ENCODE measurements at regions of chr5 and their contacts with region 1.

Region 1: DNA sequence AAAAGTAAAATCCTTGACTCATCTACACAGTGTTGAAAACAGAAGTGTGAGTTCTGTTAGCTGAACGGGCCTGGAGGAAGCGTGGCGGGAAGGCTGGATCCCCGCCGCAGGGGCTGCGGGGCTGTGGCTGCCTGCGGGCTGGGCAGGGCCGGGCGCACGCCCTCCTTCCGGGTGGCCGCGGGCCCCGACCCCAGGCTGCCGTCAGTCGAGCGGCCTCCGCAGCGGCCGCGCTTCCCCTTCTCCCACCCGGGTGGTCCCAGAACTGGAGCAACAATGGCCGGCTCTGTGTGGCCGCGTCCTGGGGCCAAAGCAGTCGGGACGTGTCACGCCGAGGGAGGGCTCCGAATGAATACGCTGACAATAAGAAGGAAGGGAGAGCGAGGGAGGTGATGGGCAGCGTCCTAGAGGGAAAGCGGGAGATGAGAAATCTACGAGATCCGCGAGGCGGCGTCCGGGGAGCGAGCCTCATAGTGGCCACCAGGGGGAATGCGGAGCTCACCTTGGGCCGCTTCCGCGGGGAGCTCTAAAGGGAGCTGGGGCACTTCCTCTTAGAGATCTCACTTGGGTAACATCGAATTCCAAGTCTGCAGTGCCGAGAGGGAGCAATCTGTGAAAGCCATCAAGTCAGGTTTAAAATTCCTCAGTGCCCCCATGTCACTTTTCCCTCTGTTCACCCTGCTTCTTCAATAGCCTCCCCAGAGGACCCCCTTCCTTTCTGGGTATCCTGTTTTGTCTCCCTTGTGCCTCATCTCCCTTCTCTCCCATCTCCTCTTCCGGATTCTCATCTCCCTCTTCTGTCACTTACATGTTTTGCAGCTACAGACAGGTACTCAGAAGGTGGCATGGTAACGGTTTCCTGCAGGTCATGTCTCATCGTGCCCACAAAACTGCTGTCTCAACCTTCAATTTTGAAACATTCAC is 83.9 kb downstream of the SLC1A3 start:
- DNase-seq: peak; percentile 69
- ATAC-seq: peak; percentile 80
- H3K4me3 Mint-ChIP-seq: peak overlapping the region; percentile 94
- H3K27ac Mint-ChIP-seq: peak overlapping the region; percentile 86
- H3K4me1 Mint-ChIP-seq: peaks cover 39% of the 10 kb centered on the region
- H3K27me3 Mint-ChIP-seq: no peaks in the 10 kb centered on the region
- CTCF ChIP-seq: no peak

Region 2: GRCh38 chr5:34838785-34839714 is 1851.3 kb before region 1 on chr5 and contains the start of gene TTC23L:
- CTCF ChIA-PET with region 1: no interaction called
- POLR2A ChIA-PET with region 1: no interaction called
- intact Hi-C with region 1: loop called (anchors 10 kb)
- DNase-seq: peak; percentile 88
- ATAC-seq: peak; percentile 89
- H3K4me3 Mint-ChIP-seq: peak within 1 kb of the TSS; percentile 94
- H3K27ac Mint-ChIP-seq: peak within 1 kb of the TSS; percentile 96
- H3K4me1 Mint-ChIP-seq: peaks cover 13% of the 10 kb centered on the region
- H3K27me3 Mint-ChIP-seq: peaks cover 2% of the 10 kb centered on the region
- CTCF ChIP-seq: no peak
- total RNA-seq, gene TTC23L: not detected in 2 replicates

Region 3: DNA sequence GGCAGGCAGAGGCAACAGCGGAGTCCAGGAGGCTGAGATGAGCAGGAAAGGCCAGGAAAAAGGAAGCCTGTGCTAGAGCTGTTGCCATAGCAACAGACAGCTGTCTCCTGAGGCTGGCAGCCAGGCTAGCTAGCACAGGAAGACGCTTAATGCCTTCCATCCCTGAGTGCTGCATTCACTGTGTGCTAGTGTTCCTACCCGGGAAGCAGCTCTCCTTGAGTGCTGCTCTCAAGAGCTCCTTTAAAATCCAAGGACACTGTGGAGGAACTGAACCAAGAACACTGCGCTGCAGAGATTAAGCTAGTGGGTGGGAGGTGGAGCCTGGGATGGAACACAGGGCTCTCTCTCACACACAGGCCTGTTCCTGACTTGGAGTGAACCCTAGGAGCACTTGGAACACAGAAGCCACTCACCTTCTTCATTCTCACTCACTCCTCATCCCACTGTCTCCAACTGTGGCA is 887.1 kb before region 1 on chr5:
- CTCF ChIA-PET with region 1: no interaction called
- POLR2A ChIA-PET with region 1: no interaction called
- intact Hi-C with region 1: no loop called
- DNase-seq: no peak
- ATAC-seq: no peak
- H3K4me3 Mint-ChIP-seq: no peak overlapping the region
- H3K27ac Mint-ChIP-seq: no peak overlapping the region
- H3K4me1 Mint-ChIP-seq: no peaks in the 10 kb centered on the region
- H3K27me3 Mint-ChIP-seq: no peaks in the 10 kb centered on the region
- CTCF ChIP-seq: no peak

Region 4: GRCh38 chr5:36079200-36079761 is 611.0 kb before region 1 on chr5:
- CTCF ChIA-PET with region 1: interaction called, 13 read pairs
- POLR2A ChIA-PET with region 1: no interaction called
- intact Hi-C with region 1: loop called (anchors 2 kb)
- DNase-seq: no peak
- ATAC-seq: peak; percentile 73
- H3K4me3 Mint-ChIP-seq: no peak overlapping the region
- H3K27ac Mint-ChIP-seq: no peak overlapping the region
- H3K4me1 Mint-ChIP-seq: no peaks in the 10 kb centered on the region
- H3K27me3 Mint-ChIP-seq: peaks cover 16% of the 10 kb centered on the region
- CTCF ChIP-seq: no peak

Region 5: DNA sequence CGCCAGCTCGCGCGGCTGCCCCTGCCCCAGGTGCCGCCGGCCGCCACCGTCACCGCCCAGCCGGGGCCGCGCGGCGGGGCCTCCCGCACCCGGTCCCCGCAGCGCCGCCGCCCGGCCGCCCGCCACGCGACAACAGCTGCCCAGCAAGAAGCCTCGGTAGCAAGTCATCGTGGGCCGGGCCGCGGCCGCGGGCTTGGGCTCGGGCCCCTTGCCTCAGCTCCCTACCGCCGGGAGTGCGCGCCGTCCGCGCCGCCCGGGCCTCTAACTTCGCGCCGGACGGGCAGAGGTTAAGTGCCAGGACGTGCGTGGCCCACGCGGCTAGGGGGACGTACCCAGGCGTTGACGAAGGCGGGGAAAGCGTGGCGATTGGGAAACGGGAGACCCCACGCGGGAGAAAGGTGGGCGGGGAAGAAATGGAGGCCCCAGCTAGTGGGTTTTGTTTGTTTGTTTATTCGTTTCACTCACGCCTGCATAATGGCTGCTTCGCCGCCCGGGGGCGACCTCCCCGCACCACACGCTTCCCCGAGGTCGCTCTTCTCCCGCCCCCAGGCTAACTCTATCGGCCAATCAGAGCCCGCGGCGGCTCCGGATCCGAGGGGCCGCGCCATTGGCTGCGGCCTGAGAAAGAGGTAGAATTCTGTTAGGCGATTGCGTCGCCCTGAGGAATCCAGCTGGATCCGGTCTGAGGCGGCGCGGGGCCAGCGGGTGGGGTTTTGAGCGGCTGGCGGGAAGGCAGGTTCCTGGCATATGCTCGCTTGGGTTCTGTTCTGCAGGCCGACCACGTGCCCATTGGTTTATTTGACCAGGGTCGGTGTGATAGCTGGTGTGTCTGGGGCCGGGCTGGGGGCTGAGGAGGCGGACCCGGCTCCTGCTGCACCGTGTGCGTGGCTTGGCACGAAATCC is 448.4 kb before region 1 on chr5 and contains the start of gene NADK2:
- CTCF ChIA-PET with region 1: interaction called, 8 read pairs
- POLR2A ChIA-PET with region 1: interaction called, 10 read pairs
- intact Hi-C with region 1: loop called (anchors 1 kb)
- DNase-seq: peak; percentile 87
- ATAC-seq: peak; percentile 87
- H3K4me3 Mint-ChIP-seq: peak within 1 kb of the TSS; percentile 91
- H3K27ac Mint-ChIP-seq: peak within 1 kb of the TSS; percentile 95
- H3K4me1 Mint-ChIP-seq: peaks cover 49% of the 10 kb centered on the region
- H3K27me3 Mint-ChIP-seq: no peaks in the 10 kb centered on the region
- CTCF ChIP-seq: no peak
- total RNA-seq, gene NADK2: 13.3 and 18.2 TPM in 2 replicates

Region 6: GRCh38 chr5:36507332-36507952 is 182.9 kb before region 1 on chr5:
- CTCF ChIA-PET with region 1: interaction called, 15 read pairs
- POLR2A ChIA-PET with region 1: no interaction called
- intact Hi-C with region 1: loop called (anchors 1 kb)
- DNase-seq: peak; percentile 56
- ATAC-seq: peak; percentile 28
- H3K4me3 Mint-ChIP-seq: no peak overlapping the region
- H3K27ac Mint-ChIP-seq: no peak overlapping the region
- H3K4me1 Mint-ChIP-seq: no peaks in the 10 kb centered on the region
- H3K27me3 Mint-ChIP-seq: peaks cover 13% of the 10 kb centered on the region
- CTCF ChIP-seq: peak; percentile 48

Region 7: DNA sequence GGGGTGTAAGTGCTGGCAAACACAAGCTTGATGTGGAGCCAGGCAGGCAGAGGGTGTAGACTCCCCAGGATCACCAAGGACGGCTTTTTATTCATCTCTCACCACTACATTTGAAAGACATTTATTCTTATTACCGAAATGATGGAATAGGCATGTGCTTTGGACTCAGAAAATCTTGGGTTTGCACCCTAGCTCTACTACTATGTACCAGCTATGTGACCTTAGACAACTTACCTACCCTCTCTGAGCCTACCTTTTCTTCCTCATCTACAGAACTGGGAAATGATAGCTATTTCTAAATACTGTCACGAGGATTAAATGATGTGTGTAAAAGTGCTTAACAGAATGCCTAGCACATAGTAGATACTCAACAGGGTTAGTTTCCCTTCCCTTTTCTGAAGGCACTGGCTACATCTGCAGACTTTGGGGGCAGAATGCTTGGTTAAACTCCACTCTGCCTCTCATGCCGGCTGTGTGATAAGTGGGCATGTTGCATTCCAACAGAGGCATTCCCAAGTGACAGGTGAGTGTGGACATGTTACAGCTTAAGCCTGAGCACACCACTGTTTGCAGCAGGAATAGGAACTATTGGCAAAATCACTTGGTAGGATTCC is 10.9 kb after region 1 on chr5:
- CTCF ChIA-PET with region 1: interaction called, 32 read pairs
- POLR2A ChIA-PET with region 1: interaction called, 9 read pairs
- intact Hi-C with region 1: loop called (anchors 1 kb)
- DNase-seq: no peak
- ATAC-seq: peak; percentile 98
- H3K4me3 Mint-ChIP-seq: peak overlapping the region; percentile 62
- H3K27ac Mint-ChIP-seq: peak overlapping the region; percentile 82
- H3K4me1 Mint-ChIP-seq: peaks cover 29% of the 10 kb centered on the region
- H3K27me3 Mint-ChIP-seq: no peaks in the 10 kb centered on the region
- CTCF ChIP-seq: no peak

Region 8: DNA sequence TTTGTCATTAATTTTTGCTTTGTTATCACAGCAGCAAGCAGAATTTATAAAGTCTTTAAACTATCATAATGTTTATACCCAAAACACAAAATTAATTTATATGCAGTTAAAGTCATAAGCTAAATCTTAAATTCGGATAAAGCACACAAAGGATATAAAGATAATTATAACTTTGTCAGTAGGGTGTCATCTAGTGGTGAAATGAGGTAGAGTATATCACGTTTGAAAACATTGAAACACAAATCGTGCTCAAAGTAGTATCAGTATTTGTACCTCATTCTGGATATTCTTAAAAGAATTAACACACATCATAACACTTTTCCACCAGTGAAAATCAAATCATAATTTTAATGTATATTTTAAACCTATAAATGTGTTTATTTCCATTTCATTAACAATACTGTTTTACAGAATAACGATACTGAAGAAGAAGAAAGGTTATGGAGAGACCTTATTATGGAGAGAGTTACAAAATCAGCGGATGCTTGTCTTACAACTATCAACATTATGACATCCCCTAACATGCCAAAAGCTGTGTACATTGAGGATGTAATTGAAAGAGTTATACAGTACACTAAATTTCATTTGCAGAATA is 315.7 kb after region 1 on chr5:
- CTCF ChIA-PET with region 1: no interaction called
- POLR2A ChIA-PET with region 1: no interaction called
- intact Hi-C with region 1: loop called (anchors 5 kb)
- DNase-seq: no peak
- ATAC-seq: no peak
- H3K4me3 Mint-ChIP-seq: no peak overlapping the region
- H3K27ac Mint-ChIP-seq: no peak overlapping the region
- H3K4me1 Mint-ChIP-seq: no peaks in the 10 kb centered on the region
- H3K27me3 Mint-ChIP-seq: no peaks in the 10 kb centered on the region
- CTCF ChIP-seq: no peak

Measured in activated B cell treated with CpG ODN at 0.5 μM for 24 hours (primary cell).